ENCODE measurements at regions of chr14 and their contacts with region 1.

Region 1: GRCh38 chr14:71320107-71320733 is 413.0 kb downstream of the PCNX1 start:
- DNase-seq: peak; percentile 99

Region 2: DNA sequence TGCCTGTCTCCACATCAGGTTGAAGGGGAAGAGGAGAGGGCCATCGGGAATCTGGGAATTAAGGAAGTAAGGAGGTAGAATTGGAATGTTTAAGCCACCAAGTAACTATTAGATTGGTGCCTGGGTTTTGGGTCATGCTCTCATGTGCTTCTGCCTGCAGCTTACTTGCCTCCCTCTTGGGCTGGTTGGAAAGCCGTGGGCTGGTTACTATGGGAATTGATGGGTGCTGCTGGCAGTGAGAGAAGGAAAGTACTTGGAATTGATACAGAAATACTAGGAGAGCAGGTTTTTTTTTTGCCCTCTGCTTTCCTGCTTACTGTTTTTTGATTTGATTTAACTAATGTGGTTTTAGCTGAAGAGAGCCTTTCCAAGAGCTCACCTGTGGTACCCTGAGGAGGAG is 118.5 kb after region 1 on chr14:
- intact Hi-C with region 1: loop called in 1 of 2 experiments (anchors 10 kb)
- DNase-seq: no peak

Region 3: GRCh38 chr14:71720978-71721624 is 400.9 kb after region 1 on chr14:
- intact Hi-C with region 1: loop called in 1 of 2 experiments (anchors 10 kb)
- DNase-seq: no peak

Region 4: DNA sequence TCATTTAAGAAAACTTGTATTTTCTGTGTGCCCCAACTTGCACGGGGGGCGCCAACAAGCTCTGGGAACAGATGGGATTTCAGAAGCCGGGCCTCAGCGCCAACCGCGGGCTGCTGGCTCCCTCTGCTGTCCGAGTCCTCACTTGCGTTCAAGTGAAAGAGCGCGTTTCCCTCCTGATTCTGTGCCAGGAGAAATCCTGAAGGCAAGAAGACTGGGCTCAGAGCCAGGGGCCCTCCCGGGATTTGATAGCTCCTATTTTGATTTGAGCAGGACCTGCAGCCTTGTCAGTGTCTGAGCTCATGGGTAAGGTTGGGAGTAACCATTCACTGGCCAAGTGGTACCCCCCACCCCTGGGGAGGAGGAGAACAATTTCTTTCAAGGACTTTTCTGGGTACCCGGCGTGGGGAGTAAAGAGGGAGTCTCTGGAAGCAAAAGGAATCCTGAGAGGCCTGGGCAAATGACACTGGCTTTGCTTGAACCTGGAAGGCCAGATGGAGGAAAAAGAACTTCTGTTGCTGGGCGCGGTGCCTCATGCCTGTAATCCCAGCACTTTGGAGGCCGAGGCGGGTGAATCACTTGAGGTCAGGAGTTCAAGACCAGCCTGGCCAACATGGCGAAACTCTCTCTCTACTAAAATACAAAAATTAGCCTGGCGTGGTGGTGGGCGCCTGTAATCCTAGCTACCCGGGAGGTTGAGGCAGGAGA is 433.1 kb after region 1 on chr14:
- intact Hi-C with region 1: loop called in 1 of 2 experiments (anchors 5 kb)
- DNase-seq: peak; percentile 96

Measured in posterior vena cava (tissue), 2 donors.